HEK293T (cell line): ENCODE measurements at regions of chr6 and their contacts with region 1.

Region 1: GRCh38 chr6:45174045-45174444 is 154.1 kb upstream of the RUNX2 start:
- DNase-seq: no peak

Region 2: DNA sequence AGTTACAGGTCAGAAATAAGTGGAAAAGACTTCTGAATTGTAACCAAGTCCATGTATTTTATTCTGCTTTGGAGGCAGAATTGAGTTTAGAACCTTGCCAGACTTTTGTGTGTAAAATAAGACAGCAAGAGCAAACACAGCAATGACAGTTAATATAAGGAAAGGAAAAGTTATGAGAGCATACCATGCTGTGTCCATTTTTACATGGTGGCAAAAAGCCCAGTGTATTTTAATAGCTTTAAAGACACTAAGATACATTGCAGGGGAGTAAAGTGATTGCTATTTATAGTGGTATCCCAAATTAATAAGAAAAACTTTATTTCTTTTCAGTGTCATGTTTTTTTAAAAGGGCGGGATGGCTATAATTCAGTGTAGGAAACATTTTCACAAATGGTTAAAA is 741.3 kb before region 1 on chr6:
- CTCF ChIA-PET with region 1: interaction called, 13 read pairs
- POLR2A ChIA-PET with region 1: no interaction called
- DNase-seq: no peak